A673 (cell line): ENCODE measurements at regions of chr10 and their contacts with region 1.

Region 1: DNA sequence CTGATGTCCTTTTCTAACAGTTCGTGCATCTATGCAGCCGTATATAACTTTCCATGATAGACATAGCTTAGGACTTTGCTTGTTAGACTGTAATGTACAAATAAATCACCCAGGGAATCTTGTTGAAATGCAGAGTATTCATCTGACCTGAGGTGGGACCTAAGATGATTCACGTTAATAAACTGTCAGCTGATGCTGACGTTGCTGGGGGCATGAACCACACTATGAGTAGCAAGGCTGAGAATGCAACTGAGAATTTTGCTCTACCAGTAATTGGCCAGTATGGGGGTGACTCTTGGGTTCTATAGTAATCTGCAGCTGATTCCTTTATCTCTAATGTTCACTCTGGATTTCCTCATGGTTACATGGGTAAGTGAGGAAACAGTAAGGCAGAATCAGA is 130.1 kb upstream of the MALRD1 start:
- DNase-seq: peak; percentile 70
- H3K4me3 ChIP-seq: no peak overlapping the region
- H3K27ac ChIP-seq: peak overlapping the region; percentile 89
- H3K4me1 ChIP-seq: peaks cover 18% of the 10 kb centered on the region
- H3K27me3 ChIP-seq: no peaks in the 10 kb centered on the region
- CTCF ChIP-seq: no peak

Region 2: GRCh38 chr10:18689498-18689897 is 229.0 kb before region 1 on chr10:
- CTCF ChIA-PET with region 1: no interaction called
- POLR2A ChIA-PET with region 1: no interaction called
- intact Hi-C with region 1: loop called (anchors 10 kb)
- DNase-seq: peak; percentile 64
- H3K4me3 ChIP-seq: no peak overlapping the region
- H3K27ac ChIP-seq: no peak overlapping the region
- H3K4me1 ChIP-seq: peaks cover 12% of the 10 kb centered on the region
- H3K27me3 ChIP-seq: no peaks in the 10 kb centered on the region
- CTCF ChIP-seq: peak; percentile 65

Region 3: DNA sequence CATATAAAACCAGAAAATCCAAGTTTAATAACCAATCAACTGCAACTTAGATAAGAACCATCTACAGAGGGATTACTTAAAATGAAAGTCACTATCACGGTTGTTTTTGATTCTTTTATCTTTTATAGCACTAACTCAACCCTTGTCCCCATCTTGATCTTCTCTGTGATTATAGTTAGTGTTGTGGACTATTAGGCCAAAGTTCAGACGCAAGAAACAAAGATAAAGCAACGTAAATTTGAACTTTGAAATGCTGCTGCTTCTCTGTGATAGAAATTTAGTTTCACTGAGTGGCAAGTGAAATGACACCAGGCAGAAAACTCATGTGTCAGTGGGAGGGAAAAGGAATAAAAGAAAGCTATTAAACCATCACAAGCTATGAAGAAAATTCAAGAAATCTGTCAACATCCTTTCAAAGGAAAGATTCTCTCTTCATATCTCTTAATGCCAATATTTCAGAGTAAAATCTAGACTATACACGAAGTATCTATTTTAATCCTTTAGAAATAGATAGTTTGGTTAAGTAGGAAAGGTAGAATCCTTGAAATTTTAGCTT is 58.2 kb after region 1 on chr10:
- CTCF ChIA-PET with region 1: no interaction called
- POLR2A ChIA-PET with region 1: no interaction called
- intact Hi-C with region 1: loop called (anchors 5 kb)
- DNase-seq: no peak
- H3K4me3 ChIP-seq: no peak overlapping the region
- H3K27ac ChIP-seq: no peak overlapping the region
- H3K4me1 ChIP-seq: peaks cover 34% of the 10 kb centered on the region
- H3K27me3 ChIP-seq: no peaks in the 10 kb centered on the region
- CTCF ChIP-seq: no peak

Region 4: DNA sequence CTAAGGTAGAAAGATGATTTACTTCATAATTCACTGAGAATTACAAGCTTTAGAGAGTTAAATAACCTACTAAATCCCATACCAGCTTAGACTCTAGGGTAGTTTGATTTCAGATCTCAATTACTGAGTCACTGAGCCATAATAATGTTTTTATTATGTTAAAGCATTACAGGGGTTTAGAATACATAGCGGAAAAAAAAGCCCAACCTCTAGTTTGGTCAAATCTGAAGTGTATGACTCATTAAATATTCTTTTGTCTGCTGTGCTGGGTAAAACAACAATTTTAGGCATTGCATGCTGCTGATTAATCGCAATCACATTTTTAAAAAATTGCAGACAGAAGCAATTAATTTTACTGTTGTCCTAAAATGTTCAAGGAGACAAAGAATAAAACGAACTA is 178.6 kb after region 1 on chr10:
- CTCF ChIA-PET with region 1: no interaction called
- POLR2A ChIA-PET with region 1: no interaction called
- intact Hi-C with region 1: loop called (anchors 2 kb)
- DNase-seq: peak; percentile 65
- H3K4me3 ChIP-seq: no peak overlapping the region
- H3K27ac ChIP-seq: no peak overlapping the region
- H3K4me1 ChIP-seq: peaks cover 23% of the 10 kb centered on the region
- H3K27me3 ChIP-seq: no peaks in the 10 kb centered on the region
- CTCF ChIP-seq: no peak

Region 5: DNA sequence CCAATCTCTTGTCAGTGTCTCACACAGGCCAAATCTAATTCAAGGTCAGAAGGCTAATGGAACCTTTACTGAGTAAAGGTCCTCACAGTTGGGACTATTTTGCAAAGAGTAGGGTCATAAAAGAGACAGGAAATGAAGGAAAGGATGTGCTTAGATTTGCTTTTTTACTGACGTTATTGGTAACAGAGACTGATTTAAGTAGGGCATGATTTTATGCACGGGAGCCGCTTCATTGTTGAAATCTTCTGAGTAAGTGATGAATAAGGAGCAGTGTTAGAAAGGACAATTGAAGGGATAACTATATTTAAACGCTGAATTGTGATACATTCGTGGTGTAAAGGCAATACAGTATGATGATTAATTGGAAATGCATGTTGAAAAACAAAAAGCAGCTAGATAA is 391.5 kb after region 1 on chr10:
- CTCF ChIA-PET with region 1: no interaction called
- POLR2A ChIA-PET with region 1: no interaction called
- intact Hi-C with region 1: loop called (anchors 5 kb)
- DNase-seq: peak; percentile 70
- H3K4me3 ChIP-seq: no peak overlapping the region
- H3K27ac ChIP-seq: no peak overlapping the region
- H3K4me1 ChIP-seq: no peaks in the 10 kb centered on the region
- H3K27me3 ChIP-seq: no peaks in the 10 kb centered on the region
- CTCF ChIP-seq: no peak

Region 6: DNA sequence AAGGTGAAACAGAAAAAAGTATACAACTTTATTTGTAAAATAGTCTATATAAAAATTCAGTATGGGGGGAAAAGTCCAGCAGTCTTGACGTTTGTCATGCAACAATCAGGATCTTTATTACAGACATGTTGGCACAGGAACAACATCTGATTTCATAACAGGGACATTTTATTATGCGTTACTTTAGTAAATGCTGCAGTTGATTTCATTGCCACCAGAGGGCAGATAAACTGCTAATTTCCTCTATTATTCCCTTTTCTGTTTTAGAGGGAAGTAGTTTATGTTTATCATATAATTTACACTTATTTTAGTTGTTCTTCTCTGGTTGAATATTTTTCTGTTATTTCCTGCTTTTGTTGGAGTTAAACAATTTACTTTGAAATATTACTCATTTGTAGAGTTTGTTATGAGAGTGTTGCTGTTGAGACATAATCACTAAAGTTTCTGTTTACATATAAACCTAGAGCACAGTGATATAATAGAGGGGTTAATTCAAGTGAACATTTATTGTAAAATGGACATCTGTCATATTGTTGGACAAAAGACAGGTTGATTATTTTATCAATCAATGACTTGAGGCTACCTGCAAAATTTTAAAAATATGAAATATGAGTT is 901.0 kb after region 1 on chr10:
- CTCF ChIA-PET with region 1: no interaction called
- POLR2A ChIA-PET with region 1: no interaction called
- intact Hi-C with region 1: loop called (anchors 10 kb)
- DNase-seq: peak; percentile 84
- H3K4me3 ChIP-seq: peak overlapping the region; percentile 85
- H3K27ac ChIP-seq: peak overlapping the region; percentile 46
- H3K4me1 ChIP-seq: peaks cover 27% of the 10 kb centered on the region
- H3K27me3 ChIP-seq: no peaks in the 10 kb centered on the region
- CTCF ChIP-seq: peak; percentile 84

Region 7: GRCh38 chr10:20017961-20018360 is 1099.4 kb after region 1 on chr10:
- CTCF ChIA-PET with region 1: no interaction called
- POLR2A ChIA-PET with region 1: no interaction called
- intact Hi-C with region 1: loop called (anchors 10 kb)
- DNase-seq: no peak
- H3K4me3 ChIP-seq: no peak overlapping the region
- H3K27ac ChIP-seq: peak overlapping the region; percentile 37
- H3K4me1 ChIP-seq: peaks cover 30% of the 10 kb centered on the region
- H3K27me3 ChIP-seq: no peaks in the 10 kb centered on the region
- CTCF ChIP-seq: no peak